ENCODE measurements at regions of chr20 and their contacts with region 1.

Region 1: DNA sequence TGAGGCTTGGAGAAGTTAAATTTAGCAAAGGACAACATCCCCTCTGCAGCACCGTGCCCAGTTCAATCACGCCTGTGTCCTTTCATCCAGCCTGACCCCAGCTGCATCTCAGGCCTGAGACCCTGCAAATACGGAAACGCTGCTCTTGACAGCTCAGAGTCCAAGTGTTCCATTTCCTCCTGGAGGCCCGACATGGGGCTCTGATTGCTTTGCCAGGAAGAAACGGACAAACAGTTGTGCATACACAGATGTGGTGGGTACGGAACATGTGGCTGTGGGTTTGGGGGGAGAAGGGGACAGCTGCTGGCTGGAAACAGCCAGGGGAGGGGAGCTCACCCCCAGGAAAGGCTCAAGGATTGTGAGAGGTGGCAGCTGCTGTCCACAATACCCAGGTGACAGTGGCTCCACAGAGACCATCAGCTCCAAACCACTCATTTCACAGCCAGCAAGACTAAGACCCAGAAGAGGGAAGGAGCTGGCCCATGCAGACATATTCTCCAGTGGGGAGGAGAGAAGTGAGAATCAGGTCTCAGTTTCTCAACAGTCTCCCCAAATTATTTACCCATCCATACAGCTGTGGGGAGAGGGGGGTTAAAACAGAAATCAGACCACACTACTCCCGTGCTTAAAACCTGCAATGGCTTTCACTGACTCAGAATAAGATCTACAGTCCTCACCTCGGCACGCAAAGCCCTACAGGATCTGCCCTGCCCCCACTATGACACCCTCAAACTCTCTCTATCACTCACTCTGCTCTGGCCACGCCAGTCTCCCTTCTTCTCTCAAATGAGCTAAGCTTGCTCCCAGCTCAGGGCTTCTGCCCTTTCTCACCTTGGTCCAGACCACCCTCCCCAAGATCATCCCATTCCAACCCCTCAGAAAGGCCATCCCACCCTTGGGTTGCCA is 89.1 kb downstream of the PREX1 start:
- DNase-seq: peak; percentile 69
- H3K4me3 Mint-ChIP-seq: peak overlapping the region; percentile 54
- H3K27ac Mint-ChIP-seq: peak overlapping the region; percentile 95
- H3K4me1 Mint-ChIP-seq: peaks cover 68% of the 10 kb centered on the region
- H3K27me3 Mint-ChIP-seq: no peaks in the 10 kb centered on the region

Region 2: GRCh38 chr20:47453142-47453782 is 1285.4 kb before region 1 on chr20:
- intact Hi-C with region 1: loop called (anchors 10 kb)
- DNase-seq: peak; percentile 47
- H3K4me3 Mint-ChIP-seq: peak overlapping the region; percentile 15
- H3K27ac Mint-ChIP-seq: peak overlapping the region; percentile 70
- H3K4me1 Mint-ChIP-seq: peaks cover 44% of the 10 kb centered on the region
- H3K27me3 Mint-ChIP-seq: no peaks in the 10 kb centered on the region

Region 3: DNA sequence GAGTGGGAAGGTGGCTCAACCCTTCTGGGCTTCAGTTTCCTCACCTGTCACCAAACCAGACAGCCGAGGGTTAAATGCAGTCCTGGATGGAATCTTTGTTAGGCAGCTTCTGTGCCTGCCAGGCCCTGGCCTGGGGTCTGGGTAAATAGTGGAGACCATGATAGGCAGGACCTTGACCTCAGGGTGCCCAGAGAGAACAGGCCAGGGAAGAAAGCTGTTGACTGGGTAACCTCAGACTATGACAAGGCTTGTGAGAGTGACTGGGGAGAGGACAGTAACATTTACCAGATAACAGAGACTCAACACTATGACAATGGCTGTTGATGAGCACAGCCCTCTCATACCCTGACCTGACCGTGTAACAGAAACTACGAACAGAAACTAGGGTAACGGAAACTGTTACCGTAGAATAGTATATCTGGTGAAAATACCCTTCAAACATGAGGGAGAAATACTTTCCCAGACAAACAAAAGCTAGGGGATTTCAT is 129.1 kb before region 1 on chr20:
- intact Hi-C with region 1: no loop called
- DNase-seq: no peak
- H3K4me3 Mint-ChIP-seq: no peak overlapping the region
- H3K27ac Mint-ChIP-seq: peak overlapping the region; percentile 30
- H3K4me1 Mint-ChIP-seq: peaks cover 17% of the 10 kb centered on the region
- H3K27me3 Mint-ChIP-seq: peaks cover 7% of the 10 kb centered on the region

Region 4: GRCh38 chr20:48697879-48698724 is 40.5 kb before region 1 on chr20:
- intact Hi-C with region 1: no loop called
- DNase-seq: no peak
- H3K4me3 Mint-ChIP-seq: no peak overlapping the region
- H3K27ac Mint-ChIP-seq: no peak overlapping the region
- H3K4me1 Mint-ChIP-seq: peaks cover 24% of the 10 kb centered on the region
- H3K27me3 Mint-ChIP-seq: no peaks in the 10 kb centered on the region

Region 5: GRCh38 chr20:48727254-48727937 is 11.3 kb before region 1 on chr20:
- intact Hi-C with region 1: loop called (anchors 1 kb)
- DNase-seq: no peak
- H3K4me3 Mint-ChIP-seq: no peak overlapping the region
- H3K27ac Mint-ChIP-seq: no peak overlapping the region
- H3K4me1 Mint-ChIP-seq: peaks cover 33% of the 10 kb centered on the region
- H3K27me3 Mint-ChIP-seq: no peaks in the 10 kb centered on the region

Region 6: DNA sequence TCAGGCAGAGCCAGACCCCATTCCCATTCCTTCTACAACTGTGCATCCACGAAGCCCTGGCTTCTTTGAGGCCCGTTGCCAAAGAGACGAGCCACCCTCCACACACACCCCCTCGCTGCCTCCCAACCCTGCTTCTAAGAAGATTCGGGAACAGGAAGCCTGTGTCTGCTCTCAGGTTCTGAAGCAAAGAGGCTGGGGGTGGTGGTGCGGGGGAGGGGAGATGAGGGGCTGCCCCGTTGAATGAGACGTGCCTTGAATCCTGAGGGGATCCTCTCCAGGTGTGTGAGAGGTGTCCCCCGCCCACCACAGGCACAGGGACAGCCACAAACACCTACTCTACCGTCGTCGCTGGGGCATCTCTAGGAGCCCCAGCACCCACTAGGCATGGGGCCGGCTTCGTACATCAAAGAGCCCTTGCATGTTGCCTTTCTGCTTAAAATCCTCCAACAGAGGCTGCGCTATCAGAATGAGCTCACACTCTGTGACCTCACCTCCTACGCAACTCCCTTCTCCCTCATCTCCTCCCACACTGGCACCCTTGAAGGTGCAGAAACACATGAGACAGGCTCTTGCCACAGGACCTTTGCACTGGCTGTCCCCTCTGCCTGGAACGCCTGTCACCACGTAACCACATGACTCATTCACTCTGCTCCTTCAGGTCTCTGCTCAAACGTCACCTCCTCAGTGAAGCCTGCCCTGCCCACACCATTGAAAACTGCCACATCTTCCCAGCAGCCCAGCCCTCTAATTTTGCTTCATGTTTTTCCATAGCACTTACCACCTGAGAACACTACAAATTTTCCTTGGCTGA is 30.6 kb after region 1 on chr20:
- intact Hi-C with region 1: loop called (anchors 1 kb)
- DNase-seq: peak; percentile 86
- H3K4me3 Mint-ChIP-seq: peak overlapping the region; percentile 66
- H3K27ac Mint-ChIP-seq: peak overlapping the region; percentile 89
- H3K4me1 Mint-ChIP-seq: peaks cover 87% of the 10 kb centered on the region
- H3K27me3 Mint-ChIP-seq: no peaks in the 10 kb centered on the region

Region 7: GRCh38 chr20:48921151-48921898 is 182.7 kb after region 1 on chr20 and contains the start of gene ARFGEF2:
- intact Hi-C with region 1: loop called (anchors 1 kb)
- DNase-seq: peak; percentile 96
- H3K4me3 Mint-ChIP-seq: peak within 1 kb of the TSS; percentile 98
- H3K27ac Mint-ChIP-seq: peak within 1 kb of the TSS; percentile 99
- H3K4me1 Mint-ChIP-seq: peaks cover 50% of the 10 kb centered on the region
- H3K27me3 Mint-ChIP-seq: peaks cover 4% of the 10 kb centered on the region
- total RNA-seq, gene ARFGEF2: 28.3 and 30.1 TPM in 2 replicates